Naive thymus-derived CD4-positive, alpha-beta T cell (primary cell): ENCODE measurements at regions of chr14 and their contacts with region 1.

Region 1: DNA sequence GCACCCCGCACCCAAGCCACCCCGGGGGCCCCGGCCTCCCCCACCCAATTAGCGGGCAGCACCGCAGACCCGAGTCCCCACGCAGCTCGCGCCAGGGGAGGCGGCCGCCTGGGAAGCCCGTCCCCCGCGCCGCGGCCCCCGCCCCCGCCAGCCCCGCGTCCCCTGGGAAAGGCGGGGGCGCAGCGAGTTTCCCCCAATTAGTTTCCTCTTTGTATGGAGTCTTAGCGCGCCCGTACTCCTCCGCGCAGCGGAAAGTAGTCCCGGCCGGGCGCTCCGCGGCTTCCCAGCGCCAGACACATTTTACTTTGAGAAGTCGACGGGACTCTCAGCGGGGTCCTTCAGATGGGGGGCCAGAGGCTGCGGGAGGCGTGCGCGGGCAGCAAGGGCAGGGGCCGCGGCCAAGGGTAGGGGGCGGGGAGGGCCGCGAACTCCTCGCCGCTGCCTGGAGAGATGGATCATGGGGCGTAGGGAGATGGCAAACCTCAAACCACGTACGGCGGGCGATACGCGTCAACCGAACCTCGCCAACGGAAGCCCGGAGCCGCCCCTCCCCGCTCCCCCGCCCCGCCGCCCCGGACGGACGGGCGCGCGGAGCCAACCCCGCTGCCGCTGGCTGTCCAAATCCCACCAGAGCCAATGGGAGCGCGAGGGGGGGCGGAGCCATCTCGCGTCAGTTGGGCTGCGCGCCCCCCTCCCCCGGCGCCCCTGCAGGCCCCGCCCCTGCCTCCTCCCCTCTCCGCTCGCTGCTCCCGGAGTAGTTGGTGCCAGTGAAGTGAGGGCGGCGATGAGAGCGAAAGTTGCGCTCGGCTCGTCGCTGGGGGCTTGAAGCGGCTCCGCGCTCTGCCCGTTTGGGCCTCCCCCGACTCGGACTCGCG is at the start of gene RCOR1:
- DNase-seq: peak; percentile 95 to 98 (median 98)
- ATAC-seq: peak; percentile 93
- H3K4me3 ChIP-seq: peak within 1 kb of the TSS; percentile 80
- H3K4me3 Mint-ChIP-seq: peak within 1 kb of the TSS; percentile 86 to 96 (median 93)
- H3K27ac ChIP-seq: peak within 1 kb of the TSS; percentile 99
- H3K27ac Mint-ChIP-seq: peak within 1 kb of the TSS; percentile 90 to 98 (median 96)
- H3K4me1 ChIP-seq: peaks cover 10 to 12% of the 10 kb centered on the region in 2 donors
- H3K4me1 Mint-ChIP-seq: peaks cover 15 to 34% (median 24%) of the 10 kb centered on the region in 7 donors
- H3K27me3 ChIP-seq: no peaks in the 10 kb centered on the region
- H3K27me3 Mint-ChIP-seq: peaks cover 0 to 16% (median 0%) of the 10 kb centered on the region in 5 donors
- total RNA-seq, gene RCOR1: 19.0 to 34.4 (median 23.7) TPM

Region 2: GRCh38 chr14:102144914-102145313 is 447.2 kb before region 1 on chr14:
- CTCF ChIA-PET with region 1: no interaction called
- POLR2A ChIA-PET with region 1: no interaction called
- intact Hi-C with region 1: loop called in 1 of 2 experiments (anchors 2 kb)
- DNase-seq: no peak
- ATAC-seq: no peak
- H3K4me3 ChIP-seq: no peak overlapping the region
- H3K4me3 Mint-ChIP-seq: peak overlapping the region in 2 of 10 donors; percentile 6 to 50
- H3K27ac ChIP-seq: no peak overlapping the region
- H3K27ac Mint-ChIP-seq: no peak overlapping the region
- H3K4me1 ChIP-seq: peaks cover 12 to 17% of the 10 kb centered on the region in 2 donors
- H3K4me1 Mint-ChIP-seq: peaks cover 35 to 70% (median 59%) of the 10 kb centered on the region in 7 donors
- H3K27me3 ChIP-seq: no peaks in the 10 kb centered on the region
- H3K27me3 Mint-ChIP-seq: no peaks in the 10 kb centered on the region

Region 3: DNA sequence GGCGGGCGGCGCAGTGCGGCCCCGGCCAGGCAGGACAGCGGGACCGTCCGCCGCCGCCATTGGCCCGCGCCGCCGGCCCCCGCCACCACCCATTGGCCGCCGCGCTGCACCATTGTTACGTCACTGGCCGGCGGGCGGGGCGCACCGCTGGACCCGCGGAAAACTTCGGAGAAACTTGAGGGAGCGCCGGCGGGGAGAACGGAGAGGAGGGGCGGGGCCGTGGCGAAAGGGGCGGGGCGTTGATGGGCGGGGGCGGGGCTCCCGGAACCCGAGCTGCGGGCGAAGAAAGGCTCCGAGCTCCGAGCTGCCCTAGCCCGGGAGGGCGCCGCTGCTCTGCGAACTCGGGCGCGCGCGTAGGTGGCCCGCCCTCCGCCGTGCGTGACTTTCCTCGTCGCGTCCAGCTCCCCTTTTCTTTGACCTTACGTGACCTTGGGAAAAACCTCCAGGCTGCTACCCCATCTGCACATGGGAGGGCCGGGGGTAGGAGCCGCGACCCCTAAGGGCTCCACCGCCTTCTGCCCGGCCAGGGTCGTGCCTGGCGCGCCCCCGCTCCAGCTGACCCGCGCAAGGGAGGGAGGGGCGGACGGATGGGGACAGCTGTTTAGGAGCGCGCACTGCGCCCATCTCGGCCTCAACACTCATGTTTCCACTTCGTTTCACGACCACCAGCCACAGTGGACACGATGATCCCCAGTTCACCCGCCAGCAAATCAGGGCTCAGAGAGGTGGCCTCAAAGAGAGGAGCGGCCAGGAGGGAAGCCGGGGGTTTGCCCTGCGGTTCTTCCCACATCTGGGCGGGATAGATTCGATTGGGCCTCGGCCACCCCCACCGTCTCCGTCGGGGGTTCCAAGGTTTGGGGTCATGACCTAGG is 82.1 kb before region 1 on chr14 and contains the start of gene ANKRD9:
- CTCF ChIA-PET with region 1: no interaction called
- POLR2A ChIA-PET with region 1: no interaction called
- intact Hi-C with region 1: loop called in 1 of 2 experiments (anchors 1 kb)
- DNase-seq: peak; percentile 48 to 94 (median 66)
- ATAC-seq: peak; percentile 83
- H3K4me3 ChIP-seq: peak within 1 kb of the TSS; percentile 75
- H3K4me3 Mint-ChIP-seq: peak within 1 kb of the TSS; percentile 85 to 91 (median 88)
- H3K27ac ChIP-seq: peak within 1 kb of the TSS; percentile 58
- H3K27ac Mint-ChIP-seq: peak within 1 kb of the TSS in 8 of 9 donors; percentile 20 to 74 (median 59)
- H3K4me1 ChIP-seq: peaks cover 4 to 14% of the 10 kb centered on the region in 2 donors
- H3K4me1 Mint-ChIP-seq: peaks cover 0 to 21% (median 10%) of the 10 kb centered on the region in 7 donors
- H3K27me3 ChIP-seq: no peaks in the 10 kb centered on the region
- H3K27me3 Mint-ChIP-seq: peaks cover 0 to 3% (median 0%) of the 10 kb centered on the region in 5 donors
- total RNA-seq, gene ANKRD9: 1.1 to 8.1 (median 2.2) TPM

Region 4: GRCh38 chr14:102568114-102568621 is 24.0 kb before region 1 on chr14:
- CTCF ChIA-PET with region 1: no interaction called
- POLR2A ChIA-PET with region 1: interaction called, 5 read pairs
- intact Hi-C with region 1: loop called (anchors 1 to 2 kb)
- DNase-seq: peak in 8 of 9 donors; percentile 26 to 57 (median 46)
- ATAC-seq: no peak
- H3K4me3 ChIP-seq: peak overlapping the region; percentile 10
- H3K4me3 Mint-ChIP-seq: peak overlapping the region; percentile 55 to 85 (median 74)
- H3K27ac ChIP-seq: peak overlapping the region; percentile 41
- H3K27ac Mint-ChIP-seq: peak overlapping the region; percentile 81 to 95 (median 94)
- H3K4me1 ChIP-seq: peaks cover 0 to 14% of the 10 kb centered on the region in 2 donors
- H3K4me1 Mint-ChIP-seq: peaks cover 10 to 20% (median 15%) of the 10 kb centered on the region in 7 donors
- H3K27me3 ChIP-seq: no peaks in the 10 kb centered on the region
- H3K27me3 Mint-ChIP-seq: no peaks in the 10 kb centered on the region

Region 5: GRCh38 chr14:102928412-102929240 is 336.5 kb after region 1 on chr14:
- CTCF ChIA-PET with region 1: no interaction called
- POLR2A ChIA-PET with region 1: no interaction called
- intact Hi-C with region 1: loop called in 1 of 2 experiments (anchors 5 kb)
- DNase-seq: peak; percentile 58 to 83 (median 78)
- ATAC-seq: peak; percentile 87
- H3K4me3 ChIP-seq: peak overlapping the region; percentile 56
- H3K4me3 Mint-ChIP-seq: peak overlapping the region; percentile 73 to 85 (median 78)
- H3K27ac ChIP-seq: no peak overlapping the region
- H3K27ac Mint-ChIP-seq: peak overlapping the region in 4 of 9 donors; percentile 39 to 79 (median 50)
- H3K4me1 ChIP-seq: peaks cover 11 to 27% of the 10 kb centered on the region in 2 donors
- H3K4me1 Mint-ChIP-seq: peaks cover 4 to 19% (median 6%) of the 10 kb centered on the region in 7 donors
- H3K27me3 ChIP-seq: no peaks in the 10 kb centered on the region
- H3K27me3 Mint-ChIP-seq: peaks cover 0 to 57% (median 11%) of the 10 kb centered on the region in 5 donors

Region 6: DNA sequence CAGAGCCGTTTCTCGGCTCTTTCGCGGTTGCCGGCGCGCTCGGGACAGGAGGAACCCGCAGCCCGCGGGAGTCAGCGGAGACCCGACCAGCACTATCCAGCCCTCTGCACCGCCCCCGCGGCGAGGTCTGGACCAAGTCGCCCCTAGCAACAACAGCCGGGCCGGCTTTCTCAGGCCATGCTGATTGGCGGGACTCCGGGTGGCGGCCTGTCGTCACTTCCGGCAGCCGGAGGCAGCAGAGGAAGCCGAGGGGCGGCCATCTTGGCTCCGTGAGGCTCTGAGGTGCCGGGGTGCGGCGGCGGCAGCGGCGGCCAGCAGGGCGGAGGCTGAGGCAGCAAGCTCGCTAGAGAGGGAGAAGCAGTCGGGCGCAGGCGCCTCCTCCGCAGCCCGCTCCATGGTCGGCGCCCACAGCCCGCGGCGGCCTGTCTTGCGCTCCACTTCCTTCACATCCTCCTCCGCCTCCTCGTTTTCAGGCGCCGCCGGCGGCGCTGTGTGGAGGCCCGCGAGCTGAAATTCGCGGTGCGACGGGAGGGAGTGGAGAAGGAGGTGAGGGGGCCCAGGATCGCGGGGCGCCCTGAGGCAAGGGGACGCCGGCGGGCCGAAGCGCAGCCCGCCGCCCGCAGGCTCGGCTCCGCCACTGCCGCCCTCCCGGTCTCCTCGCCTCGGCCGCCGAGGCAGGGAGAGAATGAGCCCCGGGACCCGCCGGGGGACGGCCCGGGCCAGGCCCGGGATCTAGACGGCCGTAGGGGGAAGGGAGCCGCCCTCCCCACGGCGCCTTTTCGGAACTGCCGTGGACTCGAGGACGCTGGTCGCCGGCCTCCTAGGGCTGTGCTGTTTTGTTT is 793.2 kb after region 1 on chr14 and contains the start of gene MARK3:
- CTCF ChIA-PET with region 1: no interaction called
- POLR2A ChIA-PET with region 1: no interaction called
- intact Hi-C with region 1: loop called (anchors 5 kb)
- DNase-seq: peak; percentile 92 to 96 (median 95)
- ATAC-seq: peak; percentile 93
- H3K4me3 ChIP-seq: peak within 1 kb of the TSS; percentile 98
- H3K4me3 Mint-ChIP-seq: peak within 1 kb of the TSS; percentile 94 to 99 (median 96)
- H3K27ac ChIP-seq: peak within 1 kb of the TSS; percentile 90
- H3K27ac Mint-ChIP-seq: peak within 1 kb of the TSS; percentile 91 to 98 (median 95)
- H3K4me1 ChIP-seq: peaks cover 26 to 32% of the 10 kb centered on the region in 2 donors
- H3K4me1 Mint-ChIP-seq: peaks cover 12 to 51% (median 37%) of the 10 kb centered on the region in 7 donors
- H3K27me3 ChIP-seq: no peaks in the 10 kb centered on the region
- H3K27me3 Mint-ChIP-seq: peaks cover 0 to 13% (median 9%) of the 10 kb centered on the region in 5 donors
- total RNA-seq, gene MARK3: 86.9 to 133 (median 116) TPM